GM10248 (cell line): ENCODE measurements at regions of chr16 and their contacts with region 1.

Region 1: GRCh38 chr16:48076455-48077012 is 79.3 kb downstream of the ABCC12 start:
- DNase-seq: no peak
- CTCF ChIP-seq: no peak

Region 2: DNA sequence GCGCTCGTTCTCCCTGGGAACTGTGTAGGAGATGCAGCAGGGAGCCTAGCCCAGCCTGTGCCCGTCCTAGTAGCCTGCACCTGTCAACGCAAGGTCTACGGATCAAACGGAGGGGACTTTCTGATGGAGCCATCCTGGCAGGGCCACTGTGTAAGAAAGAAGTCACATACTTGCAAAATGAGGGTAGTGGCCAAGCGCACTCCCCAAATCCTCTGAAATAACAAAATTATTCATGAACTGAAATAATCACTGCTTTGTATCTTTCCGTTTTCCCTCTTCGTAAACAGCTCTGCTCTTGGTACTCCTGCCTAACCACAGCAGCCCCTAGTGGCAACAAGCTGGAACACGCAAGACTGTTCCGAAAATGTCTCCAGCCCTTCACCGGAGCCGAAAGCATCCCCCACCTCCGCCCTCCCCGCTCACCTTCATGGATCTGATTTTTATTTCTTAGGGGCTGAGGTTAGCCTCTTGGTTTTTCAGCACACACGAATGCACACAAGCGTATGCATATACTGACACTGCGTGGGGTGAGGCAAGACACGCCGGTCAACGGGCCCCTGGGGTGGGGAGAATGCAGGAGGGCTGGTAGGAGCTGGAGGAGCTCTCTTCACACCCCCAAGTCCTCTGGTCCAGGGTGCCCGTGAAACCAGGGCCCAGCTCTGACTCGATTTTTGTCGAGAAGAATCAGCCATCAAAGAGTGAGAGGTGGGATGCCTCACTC is 21.5 kb before region 1 on chr16:
- CTCF ChIA-PET with region 1: interaction called, 32 read pairs
- POLR2A ChIA-PET with region 1: no interaction called
- DNase-seq: peak; percentile 69
- CTCF ChIP-seq: peak; percentile 94

Region 3: DNA sequence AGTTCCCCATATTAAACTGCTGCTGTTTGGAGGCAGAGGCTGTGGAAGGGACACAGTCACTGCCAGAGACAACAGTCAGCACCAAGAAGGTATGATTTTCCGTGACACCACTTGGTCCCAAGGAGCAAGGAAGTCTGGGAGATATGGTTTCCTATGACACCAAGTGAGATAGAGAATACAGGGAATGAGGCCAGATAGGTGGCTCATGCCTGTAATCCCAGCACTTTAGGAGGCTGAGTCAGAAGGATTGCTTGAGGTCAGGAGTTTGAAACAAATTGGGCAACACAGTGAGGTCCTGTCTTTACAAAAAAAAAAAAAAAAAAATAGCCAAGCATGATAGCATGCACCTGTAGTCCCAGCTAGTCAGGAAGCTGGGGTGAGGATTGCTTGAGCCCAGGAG is 11.6 kb before region 1 on chr16:
- CTCF ChIA-PET with region 1: interaction called, 13 read pairs
- POLR2A ChIA-PET with region 1: no interaction called
- DNase-seq: no peak
- CTCF ChIP-seq: no peak

Region 4: DNA sequence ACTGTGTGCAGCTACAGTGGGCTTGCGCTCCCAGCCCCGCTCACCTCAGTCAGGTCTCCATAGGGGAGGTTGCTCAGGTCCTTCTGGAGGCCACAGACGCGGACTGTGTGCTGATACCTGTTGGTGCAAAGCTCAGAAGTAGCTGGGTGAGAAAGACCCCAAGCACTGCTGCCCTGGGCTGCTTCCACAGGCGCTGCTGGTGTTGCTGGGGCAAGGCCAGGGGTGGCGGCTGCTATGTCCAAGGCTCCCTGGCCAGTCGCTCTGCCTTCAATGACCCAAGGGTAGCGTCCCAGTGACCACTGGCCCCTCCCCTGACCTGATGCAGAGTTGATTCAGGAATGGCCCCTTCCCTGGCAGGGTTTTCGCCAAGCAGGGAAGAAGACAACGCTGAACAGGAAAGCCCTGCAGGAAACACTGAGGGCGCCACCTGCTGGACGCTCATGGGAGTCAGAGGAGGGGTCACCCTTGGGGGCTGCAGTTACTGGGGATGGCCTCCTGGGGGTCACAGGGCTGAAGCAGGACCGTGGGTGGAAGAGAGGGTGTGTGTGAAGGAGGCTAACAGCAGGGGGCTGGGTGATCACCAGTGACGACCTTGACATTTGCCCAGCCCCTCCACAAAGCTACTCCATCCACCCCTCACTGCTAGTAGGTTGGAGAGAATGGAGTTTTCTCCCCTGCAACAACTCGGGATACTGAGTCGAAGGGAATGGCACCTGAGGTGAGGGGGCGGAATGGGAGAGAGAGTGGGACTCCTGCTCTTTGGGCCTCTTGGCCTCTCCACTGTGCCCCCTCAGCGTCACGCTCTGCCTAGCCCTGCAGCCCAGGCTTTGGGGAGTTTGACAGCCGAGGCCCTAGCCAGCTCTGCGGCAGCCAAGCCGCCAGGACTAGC is 40.9 kb after region 1 on chr16:
- CTCF ChIA-PET with region 1: no interaction called
- POLR2A ChIA-PET with region 1: no interaction called
- DNase-seq: peak; percentile 85
- CTCF ChIP-seq: peak; percentile 81

Region 5: GRCh38 chr16:48156790-48157209 is 80.3 kb after region 1 on chr16:
- CTCF ChIA-PET with region 1: no interaction called
- POLR2A ChIA-PET with region 1: no interaction called
- DNase-seq: peak; percentile 80
- CTCF ChIP-seq: peak; percentile 98